ENCODE measurements at regions of chr16 and their contacts with region 1.

Region 1: DNA sequence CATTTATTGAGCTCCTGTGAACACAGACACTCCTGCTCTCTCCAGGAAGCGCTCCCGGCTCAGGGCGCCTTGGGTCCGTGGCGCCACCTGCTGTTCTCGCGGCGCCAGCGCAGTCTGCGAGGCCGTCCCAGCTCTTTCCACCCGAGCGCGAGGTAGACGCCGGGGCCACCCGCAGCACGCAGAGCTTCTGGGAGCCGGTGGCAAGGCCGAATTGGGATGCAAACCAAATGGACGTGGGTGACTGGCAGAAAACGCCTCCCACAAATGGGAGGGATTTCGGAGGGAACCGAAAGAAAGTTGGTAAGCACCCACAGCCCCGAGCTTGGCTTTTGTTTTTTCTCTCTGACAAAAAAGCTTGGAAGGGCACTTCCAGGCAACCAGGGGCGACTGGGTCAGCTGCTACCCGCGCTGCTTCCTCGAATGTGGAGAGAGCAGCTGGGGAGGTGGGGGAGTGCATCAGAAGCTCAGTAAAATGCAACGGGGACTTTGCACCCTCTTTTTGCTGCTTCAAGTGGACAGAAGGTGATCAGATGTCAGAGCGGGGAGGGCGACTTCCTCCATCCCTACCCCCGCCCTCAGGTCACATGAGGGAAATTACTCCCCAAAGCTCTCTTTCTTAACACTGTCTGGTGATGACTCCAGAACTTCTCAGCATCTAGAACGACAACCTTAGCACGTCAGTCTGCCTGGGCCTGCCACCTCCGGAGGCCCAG is 13.5 kb upstream of the N4BP1 start:
- DNase-seq: peak; percentile 75
- ATAC-seq: peak; percentile 99
- H3K4me3 ChIP-seq: peak overlapping the region; percentile 35
- H3K27ac ChIP-seq: peak overlapping the region; percentile 36
- H3K4me1 ChIP-seq: no peaks in the 10 kb centered on the region; the same call in 1 of the 2 replicates
- H3K27me3 ChIP-seq: no peaks in the 10 kb centered on the region; the same call in 1 of the 2 replicates
- CTCF ChIP-seq: peak; percentile 98
- POLR2A ChIP-seq: peak; percentile 58; the same call in 1 of the 2 replicates
- RAD21 ChIP-seq: peak; percentile 97

Region 2: DNA sequence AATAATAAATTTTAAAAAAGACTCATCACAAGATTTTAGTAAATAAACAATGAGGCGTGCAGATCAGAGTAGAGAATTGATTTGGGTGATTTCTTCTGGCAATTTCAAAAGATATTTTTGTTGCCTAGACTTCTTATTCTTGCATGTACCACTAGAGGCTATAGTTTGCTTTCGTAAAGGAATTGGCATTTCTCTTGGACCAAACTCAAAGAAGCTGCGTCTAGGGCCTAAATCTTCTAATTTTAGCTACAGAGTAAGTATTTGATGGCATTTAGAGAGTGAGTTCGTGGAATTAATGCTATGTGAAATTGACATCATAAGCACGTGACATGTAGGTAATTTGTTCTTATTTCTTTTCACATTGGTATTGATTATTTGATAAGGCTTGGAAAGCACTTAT is 351.7 kb before region 1 on chr16:
- CTCF ChIA-PET with region 1: interaction called, 8 read pairs
- POLR2A ChIA-PET with region 1: no interaction called
- dilution Hi-C with region 1: no loop called
- in situ Hi-C with region 1: no loop called
- intact Hi-C with region 1: loop called (anchors 5 kb)
- DNase-seq: peak; percentile 38
- ATAC-seq: peak; percentile 49; the same call in 1 of the 2 replicates
- H3K4me3 ChIP-seq: no peak overlapping the region
- H3K27ac ChIP-seq: no peak overlapping the region
- H3K4me1 ChIP-seq: peaks cover 2% of the 10 kb centered on the region; the same call in 1 of the 2 replicates
- H3K27me3 ChIP-seq: no peaks in the 10 kb centered on the region
- CTCF ChIP-seq: peak; percentile 24; the same call in 1 of the 2 replicates
- POLR2A ChIP-seq: no peak
- RAD21 ChIP-seq: peak; percentile 16; the same call in 1 of the 2 replicates

Region 3: GRCh38 chr16:48365581-48366164 is 257.8 kb before region 1 on chr16:
- CTCF ChIA-PET with region 1: interaction called, 11 read pairs
- POLR2A ChIA-PET with region 1: no interaction called
- dilution Hi-C with region 1: no loop called
- in situ Hi-C with region 1: no loop called
- intact Hi-C with region 1: loop called (anchors 5 kb)
- DNase-seq: peak; percentile 80
- ATAC-seq: peak; percentile 99
- H3K4me3 ChIP-seq: peak overlapping the region; percentile 50
- H3K27ac ChIP-seq: peak overlapping the region; percentile 84
- H3K4me1 ChIP-seq: peaks cover 13% of the 10 kb centered on the region
- H3K27me3 ChIP-seq: no peaks in the 10 kb centered on the region
- CTCF ChIP-seq: no peak
- POLR2A ChIP-seq: peak; percentile 77
- RAD21 ChIP-seq: no peak

Region 4: GRCh38 chr16:48542020-48542473 is 81.4 kb before region 1 on chr16:
- CTCF ChIA-PET with region 1: interaction called, 20 read pairs
- POLR2A ChIA-PET with region 1: no interaction called
- dilution Hi-C with region 1: no loop called
- in situ Hi-C with region 1: no loop called
- intact Hi-C with region 1: loop called (anchors 1 kb)
- DNase-seq: peak; percentile 54
- ATAC-seq: peak; percentile 79
- H3K4me3 ChIP-seq: no peak overlapping the region
- H3K27ac ChIP-seq: no peak overlapping the region
- H3K4me1 ChIP-seq: peaks cover 5% of the 10 kb centered on the region; the same call in 1 of the 2 replicates
- H3K27me3 ChIP-seq: no peaks in the 10 kb centered on the region
- CTCF ChIP-seq: peak; percentile 68
- POLR2A ChIP-seq: 0 out of 2 replicates have a peak, but pooled peaks have one; percentile 35
- RAD21 ChIP-seq: peak; percentile 89

Region 5: DNA sequence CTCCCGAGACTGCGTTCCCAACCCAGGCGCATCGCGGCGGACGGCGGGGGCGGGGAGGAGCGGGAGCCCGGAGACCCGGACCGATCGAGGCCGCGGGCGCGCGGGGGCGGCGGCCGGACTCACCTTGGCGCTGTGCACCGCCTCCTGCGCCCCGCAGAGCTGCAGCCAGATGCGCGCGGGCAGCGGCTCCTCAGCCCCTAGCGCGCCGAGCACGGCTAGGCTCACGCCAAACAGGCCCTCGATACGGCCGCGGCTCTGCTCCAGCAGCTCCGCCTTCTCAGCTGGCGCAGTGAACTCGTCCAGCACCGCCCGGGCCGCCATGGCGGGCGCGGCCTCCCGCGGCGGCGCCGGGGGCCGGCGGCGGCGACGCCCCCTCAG is 13.8 kb before region 1 on chr16:
- CTCF ChIA-PET with region 1: interaction called, 14 read pairs
- POLR2A ChIA-PET with region 1: no interaction called
- dilution Hi-C with region 1: no loop called
- in situ Hi-C with region 1: no loop called
- intact Hi-C with region 1: no loop called
- DNase-seq: peak; percentile 54
- ATAC-seq: peak; percentile 80
- H3K4me3 ChIP-seq: peak overlapping the region; percentile 98
- H3K27ac ChIP-seq: peak overlapping the region; percentile 77
- H3K4me1 ChIP-seq: peaks cover 22% of the 10 kb centered on the region
- H3K27me3 ChIP-seq: no peaks in the 10 kb centered on the region
- CTCF ChIP-seq: no peak
- POLR2A ChIP-seq: no peak
- RAD21 ChIP-seq: no peak

Measured in IMR-90 (cell line).